B cell (primary cell): ENCODE measurements at regions of chr12 and their contacts with region 1.

Region 1: GRCh38 chr12:118164798-118165486 is 29.0 kb downstream of the PEBP1 start:
- DNase-seq: no peak
- ATAC-seq: no peak
- H3K4me3 ChIP-seq: no peak overlapping the region
- H3K4me3 Mint-ChIP-seq: no peak overlapping the region
- H3K27ac ChIP-seq: no peak overlapping the region
- H3K27ac Mint-ChIP-seq: no peak overlapping the region
- H3K4me1 ChIP-seq: no peaks in the 10 kb centered on the region
- H3K4me1 Mint-ChIP-seq: peaks cover 12% of the 10 kb centered on the region
- H3K27me3 ChIP-seq: no peaks in the 10 kb centered on the region
- H3K27me3 Mint-ChIP-seq: no peaks in the 10 kb centered on the region
- CTCF ChIP-seq: peak; percentile 59

Region 2: DNA sequence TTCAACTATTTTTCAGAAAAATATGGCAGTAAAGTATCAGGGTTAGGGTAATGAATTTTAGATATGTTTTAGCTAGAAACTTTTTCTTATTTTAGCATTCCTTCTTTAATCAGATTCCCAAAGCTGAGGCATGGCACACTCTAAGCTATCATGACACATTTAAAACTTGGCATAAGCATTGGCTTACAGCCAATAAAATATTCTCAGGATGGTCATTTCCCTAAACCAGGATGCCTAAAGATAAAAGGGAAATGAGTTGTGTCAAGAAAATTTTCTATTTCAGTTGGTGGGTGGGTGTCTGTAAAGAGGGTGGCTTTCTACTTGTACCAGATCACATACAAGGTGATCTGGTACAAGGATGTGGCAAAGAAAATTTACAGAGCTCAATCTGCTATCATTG is 18.8 kb after region 1 on chr12:
- CTCF ChIA-PET with region 1: interaction called, 19 read pairs
- POLR2A ChIA-PET with region 1: no interaction called
- intact Hi-C with region 1: no loop called
- DNase-seq: no peak
- ATAC-seq: no peak
- H3K4me3 ChIP-seq: no peak overlapping the region
- H3K4me3 Mint-ChIP-seq: no peak overlapping the region
- H3K27ac ChIP-seq: peak overlapping the region in 1 of 2 donors; percentile 40
- H3K27ac Mint-ChIP-seq: no peak overlapping the region
- H3K4me1 ChIP-seq: peaks cover 3 to 5% of the 10 kb centered on the region in 2 donors
- H3K4me1 Mint-ChIP-seq: peaks cover 13% of the 10 kb centered on the region
- H3K27me3 ChIP-seq: no peaks in the 10 kb centered on the region
- H3K27me3 Mint-ChIP-seq: no peaks in the 10 kb centered on the region
- CTCF ChIP-seq: no peak

Region 3: DNA sequence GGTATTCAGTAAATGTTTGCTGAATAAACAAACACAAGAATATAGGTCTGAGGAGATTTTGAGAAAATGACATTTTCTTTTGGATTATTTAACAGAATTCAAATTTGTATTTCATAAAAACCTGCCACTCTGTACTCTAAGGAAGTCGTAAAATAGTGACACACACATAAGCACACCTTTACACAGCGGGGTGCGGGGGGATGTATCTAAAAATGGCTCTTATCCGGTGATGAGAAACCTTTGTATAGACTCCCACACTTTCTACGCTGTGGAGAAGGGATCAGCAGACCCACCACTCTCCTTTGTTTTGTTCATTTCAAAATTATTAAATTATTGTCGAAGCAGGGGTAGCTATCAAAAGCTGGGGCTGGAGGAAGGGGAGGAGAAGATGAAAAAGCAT is 29.0 kb after region 1 on chr12:
- CTCF ChIA-PET with region 1: no interaction called
- POLR2A ChIA-PET with region 1: no interaction called
- intact Hi-C with region 1: no loop called
- DNase-seq: no peak
- ATAC-seq: no peak
- H3K4me3 ChIP-seq: no peak overlapping the region
- H3K4me3 Mint-ChIP-seq: no peak overlapping the region
- H3K27ac ChIP-seq: no peak overlapping the region
- H3K27ac Mint-ChIP-seq: no peak overlapping the region
- H3K4me1 ChIP-seq: no peaks in the 10 kb centered on the region
- H3K4me1 Mint-ChIP-seq: no peaks in the 10 kb centered on the region
- H3K27me3 ChIP-seq: no peaks in the 10 kb centered on the region
- H3K27me3 Mint-ChIP-seq: no peaks in the 10 kb centered on the region
- CTCF ChIP-seq: no peak

Region 4: DNA sequence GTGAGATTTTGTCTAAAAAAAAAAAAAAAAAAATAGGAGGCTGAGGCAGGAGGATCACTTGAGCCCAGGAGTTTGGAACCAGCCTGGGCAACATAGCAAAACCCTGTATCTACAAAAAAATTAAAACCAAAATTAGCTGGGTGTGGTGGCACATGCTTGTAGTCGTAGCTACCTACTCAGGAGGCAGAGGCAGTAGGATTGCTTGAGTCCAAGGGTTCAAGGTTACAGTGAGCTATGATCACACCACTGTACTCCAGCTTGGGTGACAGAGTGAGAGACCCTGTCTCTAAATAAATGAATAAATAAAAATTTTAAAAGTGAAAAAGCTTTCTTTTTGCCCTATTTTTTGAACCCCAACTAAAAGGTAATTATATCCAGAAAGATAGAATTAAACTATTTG is 84.6 kb after region 1 on chr12:
- CTCF ChIA-PET with region 1: no interaction called
- POLR2A ChIA-PET with region 1: no interaction called
- intact Hi-C with region 1: no loop called
- DNase-seq: no peak
- ATAC-seq: no peak
- H3K4me3 ChIP-seq: no peak overlapping the region
- H3K4me3 Mint-ChIP-seq: no peak overlapping the region
- H3K27ac ChIP-seq: no peak overlapping the region
- H3K27ac Mint-ChIP-seq: no peak overlapping the region
- H3K4me1 ChIP-seq: no peaks in the 10 kb centered on the region
- H3K4me1 Mint-ChIP-seq: no peaks in the 10 kb centered on the region
- H3K27me3 ChIP-seq: no peaks in the 10 kb centered on the region
- H3K27me3 Mint-ChIP-seq: no peaks in the 10 kb centered on the region
- CTCF ChIP-seq: no peak